Heart left ventricle (tissue), 16 donors: ENCODE measurements at regions of chr12 and their contacts with region 1.

Region 1: GRCh38 chr12:121399391-121400331 is at the start of gene RNF34:
- DNase-seq: peak; percentile 99 to 100 (median 99)
- ATAC-seq: peak; percentile 99 to 100 (median 99)
- H3K4me3 ChIP-seq: peak within 1 kb of the TSS; percentile 77 to 100 (median 94)
- H3K27ac ChIP-seq: peak within 1 kb of the TSS; percentile 70 to 95 (median 92)
- H3K4me1 ChIP-seq: peaks cover 0 to 36% (median 22%) of the 10 kb centered on the region in 12 donors
- H3K27me3 ChIP-seq: no peaks in the 10 kb centered on the region
- CTCF ChIP-seq: peak in 3 of 12 donors; percentile 17 to 33 (median 23)
- POLR2A ChIP-seq: peak; percentile 89 to 97
- total RNA-seq, gene RNF34: 20.2 to 31.5 (median 25.7) TPM

Region 2: DNA sequence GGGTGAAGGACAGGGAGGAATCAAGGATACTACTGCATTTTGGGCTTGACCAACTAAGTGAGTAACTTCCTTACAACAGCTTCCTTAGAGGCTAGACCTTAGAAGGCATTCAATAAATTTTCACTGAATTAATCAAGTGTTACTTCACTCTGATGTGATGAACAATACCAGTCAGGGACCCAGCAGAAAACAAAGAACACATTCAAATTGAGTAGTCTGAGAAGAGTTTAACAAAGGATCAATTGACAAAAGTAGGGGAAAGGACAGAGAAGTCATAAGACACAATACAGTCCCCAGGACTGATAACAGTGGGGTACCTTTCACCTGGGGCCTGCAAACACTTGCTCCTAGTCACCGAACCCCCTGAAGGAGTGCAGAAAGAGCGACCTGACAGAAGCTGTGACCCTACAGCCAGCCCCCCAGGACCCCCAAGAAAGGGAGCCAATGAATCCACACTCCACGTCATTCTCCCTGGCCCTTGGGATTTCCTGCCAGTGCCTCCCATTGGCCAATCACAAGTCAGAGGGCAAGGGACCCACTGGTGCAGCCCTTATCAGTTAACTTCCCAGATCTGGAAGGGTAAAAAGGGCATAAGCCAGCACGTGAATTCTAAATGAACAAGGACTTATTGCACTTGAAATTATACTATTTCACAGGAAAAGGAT is 54.4 kb before region 1 on chr12:
- intact Hi-C with region 1: loop called in 4 of 10 experiments (anchors 5 kb)
- DNase-seq: no peak
- ATAC-seq: no peak
- H3K4me3 ChIP-seq: no peak overlapping the region
- H3K27ac ChIP-seq: no peak overlapping the region
- H3K4me1 ChIP-seq: peaks cover 0 to 9% (median 2%) of the 10 kb centered on the region in 12 donors
- H3K27me3 ChIP-seq: no peaks in the 10 kb centered on the region
- CTCF ChIP-seq: no peak
- POLR2A ChIP-seq: no peak

Region 3: GRCh38 chr12:121383601-121384021 is 16.1 kb before region 1 on chr12:
- intact Hi-C with region 1: no loop called
- DNase-seq: no peak
- ATAC-seq: no peak
- H3K4me3 ChIP-seq: no peak overlapping the region
- H3K27ac ChIP-seq: no peak overlapping the region
- H3K4me1 ChIP-seq: no peaks in the 10 kb centered on the region
- H3K27me3 ChIP-seq: no peaks in the 10 kb centered on the region
- CTCF ChIP-seq: no peak
- POLR2A ChIP-seq: no peak